Aorta (tissue), 5 donors: ENCODE measurements at regions of chr1 and their contacts with region 1.

Region 1: DNA sequence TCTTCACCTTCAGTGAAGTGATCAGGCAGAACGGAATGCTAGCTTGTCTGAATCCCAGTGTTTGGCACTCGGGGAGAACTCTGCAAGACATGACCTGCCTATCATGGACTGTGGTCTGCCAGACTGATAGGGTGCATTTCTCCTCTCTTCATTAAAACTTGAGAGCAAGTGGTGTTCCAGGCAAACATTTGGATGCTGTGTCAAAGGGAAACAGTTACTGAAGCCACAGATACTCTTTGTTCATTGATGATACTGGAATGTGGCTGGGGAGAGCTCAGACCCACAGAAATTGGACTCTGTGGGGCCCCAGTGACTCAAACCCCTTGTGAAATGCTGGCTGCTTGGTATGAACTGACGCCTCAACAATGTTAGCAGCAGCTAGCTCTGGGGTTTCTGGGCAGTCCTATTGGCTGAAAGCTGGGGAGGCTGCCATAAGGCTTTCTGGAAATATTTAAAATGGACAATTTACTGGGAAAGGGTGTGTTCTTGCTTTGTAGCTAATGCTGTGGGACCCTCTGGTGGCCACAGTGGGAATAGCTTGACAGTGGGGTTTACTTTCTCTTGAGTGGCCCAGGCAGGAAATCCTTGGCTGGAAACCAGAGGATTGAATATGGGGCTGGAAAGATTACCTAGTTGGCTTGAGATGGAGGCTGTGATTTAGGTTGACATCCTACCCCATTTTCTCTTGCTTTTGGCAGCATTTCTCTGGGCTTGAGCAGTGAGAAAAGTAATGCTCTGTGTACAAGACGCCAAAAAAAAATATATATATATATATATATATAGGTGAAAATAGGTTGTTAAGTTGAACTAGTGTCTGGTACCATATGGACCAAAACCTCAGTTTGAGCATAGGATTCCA is 8.0 kb upstream of the S100A10 start:
- DNase-seq: peak; percentile 93
- ATAC-seq: peak; percentile 80
- H3K4me3 ChIP-seq: no peak overlapping the region
- H3K27ac ChIP-seq: no peak overlapping the region
- H3K4me1 ChIP-seq: no peaks in the 10 kb centered on the region
- H3K27me3 ChIP-seq: no peaks in the 10 kb centered on the region

Region 2: GRCh38 chr1:151934048-151934493 is 67.5 kb before region 1 on chr1:
- intact Hi-C with region 1: loop called in 1 of 2 experiments (anchors 1 kb)
- DNase-seq: no peak
- ATAC-seq: peak; percentile 83
- H3K4me3 ChIP-seq: no peak overlapping the region
- H3K27ac ChIP-seq: no peak overlapping the region
- H3K4me1 ChIP-seq: no peaks in the 10 kb centered on the region
- H3K27me3 ChIP-seq: no peaks in the 10 kb centered on the region

Region 3: GRCh38 chr1:151968058-151968457 is 33.6 kb before region 1 on chr1:
- intact Hi-C with region 1: loop called (anchors 1 to 5 kb)
- DNase-seq: no peak
- ATAC-seq: peak; percentile 70
- H3K4me3 ChIP-seq: no peak overlapping the region
- H3K27ac ChIP-seq: no peak overlapping the region
- H3K4me1 ChIP-seq: no peaks in the 10 kb centered on the region
- H3K27me3 ChIP-seq: no peaks in the 10 kb centered on the region